AG04449 (cell line): ENCODE measurements at regions of chr1 and their contacts with region 1.

Region 1: DNA sequence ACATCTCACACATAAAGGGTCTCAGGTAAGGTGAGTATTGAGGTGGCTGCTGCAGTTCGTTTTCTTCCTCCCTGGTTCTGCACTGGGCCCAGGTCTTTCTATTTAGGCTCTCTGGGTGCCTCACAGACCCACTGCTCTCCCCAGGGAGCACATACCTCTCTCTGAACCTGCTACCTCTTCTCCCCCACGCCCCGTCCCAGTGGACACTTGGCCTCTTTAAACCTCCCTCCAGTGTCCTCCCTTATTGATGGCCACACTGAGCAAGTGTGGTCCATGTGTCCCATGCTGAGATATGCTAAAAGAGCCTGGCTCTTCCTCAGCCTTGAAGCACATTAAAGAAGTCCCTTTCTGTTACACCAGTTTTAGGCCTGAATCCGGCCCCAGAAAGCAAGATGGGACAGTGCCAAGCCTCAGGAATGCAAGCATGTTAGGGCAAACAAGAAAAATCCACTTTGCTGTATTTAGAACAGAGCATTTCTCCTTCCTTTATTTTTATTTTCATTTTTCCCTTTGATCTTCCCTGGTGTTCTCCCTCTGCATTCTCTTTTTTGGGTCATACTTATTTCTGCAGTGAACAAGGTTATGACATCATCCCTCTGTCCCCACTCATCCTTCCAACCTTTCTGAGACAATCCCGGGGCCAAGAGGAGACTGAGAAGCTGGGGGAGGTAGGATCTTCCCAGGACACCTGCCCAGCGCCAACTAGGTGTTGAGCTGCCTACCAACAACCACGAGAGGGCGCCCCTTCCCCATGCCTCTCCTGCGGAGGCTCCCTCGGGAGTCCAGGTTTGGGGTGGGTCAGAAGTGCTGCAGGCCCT is 5.0 kb upstream of the CHI3L2 start:
- DNase-seq: no peak
- H3K4me3 ChIP-seq: no peak overlapping the region
- CTCF ChIP-seq: peak; percentile 99

Region 2: GRCh38 chr1:110857964-110858948 is 364.3 kb before region 1 on chr1:
- CTCF ChIA-PET with region 1: no interaction called
- POLR2A ChIA-PET with region 1: no interaction called
- DNase-seq: no peak
- H3K4me3 ChIP-seq: no peak overlapping the region
- CTCF ChIP-seq: no peak

Region 3: DNA sequence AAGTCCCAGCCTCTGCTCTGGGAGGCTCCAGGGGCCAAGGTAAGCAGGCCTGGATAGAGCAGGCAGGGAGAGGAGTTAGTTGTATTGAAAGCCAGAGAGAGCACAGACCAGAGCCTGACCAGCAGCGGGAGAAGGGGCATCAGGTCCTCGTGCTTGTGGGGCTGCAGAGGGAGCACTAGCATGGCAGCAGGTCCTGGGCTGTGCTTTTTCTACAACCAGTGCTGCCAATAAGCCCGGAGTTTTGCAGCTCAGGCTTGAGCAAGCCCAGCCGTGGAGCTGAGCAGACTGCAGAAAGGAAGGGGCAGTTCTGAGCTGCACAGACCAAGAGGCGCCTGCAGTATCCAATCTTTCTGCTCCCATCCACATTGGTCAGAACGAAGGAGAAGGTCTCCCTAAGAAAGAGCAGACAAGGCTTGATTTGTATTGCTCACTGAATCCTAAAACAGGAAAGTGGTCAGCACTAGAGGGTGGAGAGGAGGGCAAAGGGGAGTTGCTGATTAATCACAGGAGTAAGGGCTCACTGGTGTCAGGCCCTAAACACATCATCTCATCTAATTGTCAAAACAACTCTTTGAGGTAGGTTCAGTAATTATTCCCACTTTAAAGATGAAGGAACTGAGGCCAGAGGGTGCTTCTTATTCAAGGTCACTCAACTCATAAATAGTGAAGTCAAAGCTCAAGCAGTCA is 24.8 kb before region 1 on chr1:
- CTCF ChIA-PET with region 1: interaction called, 13 read pairs
- POLR2A ChIA-PET with region 1: no interaction called
- DNase-seq: no peak
- H3K4me3 ChIP-seq: no peak overlapping the region
- CTCF ChIP-seq: peak; percentile 64

Region 4: GRCh38 chr1:111236815-111237214 is 14.3 kb after region 1 on chr1:
- CTCF ChIA-PET with region 1: interaction called, 10 read pairs
- POLR2A ChIA-PET with region 1: no interaction called
- DNase-seq: no peak
- H3K4me3 ChIP-seq: no peak overlapping the region
- CTCF ChIP-seq: no peak

Region 5: DNA sequence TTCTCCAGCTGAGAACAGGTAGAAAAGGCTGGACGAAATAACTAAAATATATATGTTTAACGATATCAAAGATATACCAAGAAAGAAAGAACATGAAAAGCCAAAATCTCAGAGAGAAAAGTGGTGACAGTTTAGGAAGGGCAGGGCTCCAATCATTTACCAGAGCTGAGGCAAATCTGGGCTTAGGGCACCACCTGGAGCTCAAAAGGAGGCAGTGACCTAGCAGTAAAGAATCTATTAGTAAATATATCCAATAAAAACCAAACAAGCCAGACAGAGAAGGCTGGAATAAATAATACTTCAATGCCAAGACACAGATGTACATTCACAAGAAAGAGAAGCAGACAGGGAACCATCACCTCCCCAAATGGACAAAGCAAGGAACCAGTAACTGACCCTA is 111.7 kb after region 1 on chr1:
- CTCF ChIA-PET with region 1: interaction called, 106 read pairs
- POLR2A ChIA-PET with region 1: no interaction called
- DNase-seq: no peak
- H3K4me3 ChIP-seq: no peak overlapping the region
- CTCF ChIP-seq: peak; percentile 60

Region 6: GRCh38 chr1:111497592-111497991 is 275.1 kb after region 1 on chr1:
- CTCF ChIA-PET with region 1: no interaction called
- POLR2A ChIA-PET with region 1: no interaction called
- DNase-seq: no peak
- H3K4me3 ChIP-seq: no peak overlapping the region
- CTCF ChIP-seq: no peak